ENCODE measurements at regions of chr20 and their contacts with region 1.

Region 1: GRCh38 chr20:2688041-2688591 is 4.5 kb upstream of the EBF4 start:
- DNase-seq: peak; percentile 71 to 89 (median 81)
- ATAC-seq: peak; percentile 95
- H3K4me3 ChIP-seq: no peak overlapping the region
- H3K4me3 Mint-ChIP-seq: peak overlapping the region in 9 of 10 donors; percentile 34 to 73 (median 58)
- H3K27ac ChIP-seq: no peak overlapping the region
- H3K27ac Mint-ChIP-seq: peak overlapping the region in 6 of 9 donors; percentile 37 to 80 (median 71)
- H3K4me1 ChIP-seq: peaks cover 6 to 13% of the 10 kb centered on the region in 2 donors
- H3K4me1 Mint-ChIP-seq: peaks cover 24 to 31% (median 27%) of the 10 kb centered on the region in 7 donors
- H3K27me3 ChIP-seq: no peaks in the 10 kb centered on the region
- H3K27me3 Mint-ChIP-seq: peaks cover 0 to 34% (median 7%) of the 10 kb centered on the region in 5 donors

Region 2: GRCh38 chr20:2663887-2664719 is 24.0 kb before region 1 on chr20 and contains the start of gene IDH3B:
- CTCF ChIA-PET with region 1: interaction called, 3 read pairs
- POLR2A ChIA-PET with region 1: interaction called, 13 read pairs
- intact Hi-C with region 1: loop called in 1 of 2 experiments (anchors 2 kb)
- DNase-seq: peak; percentile 76 to 94 (median 90)
- ATAC-seq: peak; percentile 99
- H3K4me3 ChIP-seq: peak within 1 kb of the TSS; percentile 89
- H3K4me3 Mint-ChIP-seq: peak within 1 kb of the TSS; percentile 87 to 97 (median 94)
- H3K27ac ChIP-seq: peak within 1 kb of the TSS; percentile 87
- H3K27ac Mint-ChIP-seq: peak within 1 kb of the TSS; percentile 94 to 99 (median 97)
- H3K4me1 ChIP-seq: peaks cover 10 to 15% of the 10 kb centered on the region in 2 donors
- H3K4me1 Mint-ChIP-seq: peaks cover 4 to 34% (median 29%) of the 10 kb centered on the region in 7 donors
- H3K27me3 ChIP-seq: no peaks in the 10 kb centered on the region
- H3K27me3 Mint-ChIP-seq: peaks cover 0 to 10% (median 0%) of the 10 kb centered on the region in 5 donors
- total RNA-seq, gene IDH3B: 105 to 161 (median 107) TPM

Region 3: GRCh38 chr20:2729251-2729713 is 41.2 kb after region 1 on chr20:
- CTCF ChIA-PET with region 1: interaction called, 25 read pairs
- POLR2A ChIA-PET with region 1: interaction called, 3 read pairs
- intact Hi-C with region 1: loop called in 1 of 2 experiments (anchors 1 kb)
- DNase-seq: peak in 7 of 9 donors; percentile 50 to 72 (median 66)
- ATAC-seq: peak; percentile 95
- H3K4me3 ChIP-seq: peak overlapping the region; percentile 2
- H3K4me3 Mint-ChIP-seq: peak overlapping the region; percentile 55 to 87 (median 71)
- H3K27ac ChIP-seq: peak overlapping the region; percentile 62
- H3K27ac Mint-ChIP-seq: peak overlapping the region; percentile 71 to 96 (median 90)
- H3K4me1 ChIP-seq: peaks cover 20 to 33% of the 10 kb centered on the region in 2 donors
- H3K4me1 Mint-ChIP-seq: peaks cover 9 to 47% (median 36%) of the 10 kb centered on the region in 7 donors
- H3K27me3 ChIP-seq: no peaks in the 10 kb centered on the region
- H3K27me3 Mint-ChIP-seq: peaks cover 0 to 36% (median 0%) of the 10 kb centered on the region in 5 donors

Region 4: GRCh38 chr20:2752567-2753460 is 64.7 kb after region 1 on chr20:
- CTCF ChIA-PET with region 1: interaction called, 15 read pairs
- POLR2A ChIA-PET with region 1: interaction called, 6 read pairs
- intact Hi-C with region 1: loop called (anchors 1 kb)
- DNase-seq: peak; percentile 36 to 63 (median 53)
- ATAC-seq: peak; percentile 48
- H3K4me3 ChIP-seq: peak overlapping the region; percentile 64
- H3K4me3 Mint-ChIP-seq: peak overlapping the region; percentile 74 to 90 (median 86)
- H3K27ac ChIP-seq: no peak overlapping the region
- H3K27ac Mint-ChIP-seq: peak overlapping the region in 8 of 9 donors; percentile 17 to 85 (median 56)
- H3K4me1 ChIP-seq: peaks cover 12 to 18% of the 10 kb centered on the region in 2 donors
- H3K4me1 Mint-ChIP-seq: peaks cover 20 to 35% (median 27%) of the 10 kb centered on the region in 7 donors
- H3K27me3 ChIP-seq: no peaks in the 10 kb centered on the region
- H3K27me3 Mint-ChIP-seq: peaks cover 6 to 54% (median 9%) of the 10 kb centered on the region in 5 donors

Region 5: DNA sequence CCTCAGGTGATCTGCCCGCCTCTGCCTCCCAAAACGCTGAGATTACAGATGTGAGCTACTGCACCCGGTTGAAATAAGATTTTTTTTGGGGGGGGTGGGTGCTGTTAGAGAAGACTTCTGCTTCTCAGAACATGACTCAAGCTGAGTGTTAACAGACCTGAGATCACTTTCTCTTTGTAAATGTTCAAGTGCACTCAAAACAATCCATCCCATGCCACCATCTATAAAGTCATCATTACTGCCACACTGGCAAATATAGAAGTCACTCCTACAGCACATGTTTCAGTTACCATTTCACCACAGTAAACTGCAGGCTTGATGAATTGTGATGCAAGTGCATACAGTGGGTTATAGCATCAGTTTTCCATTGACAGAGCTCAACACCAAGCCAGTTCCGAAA is 161.4 kb after region 1 on chr20:
- CTCF ChIA-PET with region 1: no interaction called
- POLR2A ChIA-PET with region 1: no interaction called
- intact Hi-C with region 1: loop called (anchors 1 to 5 kb)
- DNase-seq: no peak
- ATAC-seq: no peak
- H3K4me3 ChIP-seq: no peak overlapping the region
- H3K4me3 Mint-ChIP-seq: no peak overlapping the region
- H3K27ac ChIP-seq: no peak overlapping the region
- H3K27ac Mint-ChIP-seq: peak overlapping the region in 1 of 9 donors; percentile 18
- H3K4me1 ChIP-seq: peaks cover 0 to 10% of the 10 kb centered on the region in 2 donors
- H3K4me1 Mint-ChIP-seq: peaks cover 14 to 34% (median 27%) of the 10 kb centered on the region in 7 donors
- H3K27me3 ChIP-seq: no peaks in the 10 kb centered on the region
- H3K27me3 Mint-ChIP-seq: no peaks in the 10 kb centered on the region

Region 6: DNA sequence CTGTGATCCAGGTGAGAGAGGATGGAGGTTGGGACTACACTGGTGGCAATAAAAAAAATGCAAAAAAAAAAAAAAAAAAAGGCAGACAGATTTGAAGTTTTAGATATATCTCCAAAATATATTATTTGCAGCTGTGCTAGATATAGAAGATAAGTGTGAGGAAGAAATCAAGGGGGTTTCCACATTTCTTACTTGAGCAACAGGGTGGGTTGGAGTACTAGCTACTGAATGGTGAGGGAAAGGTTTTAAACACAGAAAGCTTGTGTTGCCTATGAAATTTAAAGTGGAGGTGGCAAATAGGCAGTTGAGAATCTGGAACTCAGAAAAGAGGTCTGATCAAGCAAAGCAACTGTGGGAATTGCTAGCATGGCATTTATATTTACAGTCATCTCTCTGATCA is 295.4 kb after region 1 on chr20:
- CTCF ChIA-PET with region 1: no interaction called
- POLR2A ChIA-PET with region 1: no interaction called
- intact Hi-C with region 1: loop called in 1 of 2 experiments (anchors 1 kb)
- DNase-seq: no peak
- ATAC-seq: no peak
- H3K4me3 ChIP-seq: no peak overlapping the region
- H3K4me3 Mint-ChIP-seq: no peak overlapping the region
- H3K27ac ChIP-seq: no peak overlapping the region
- H3K27ac Mint-ChIP-seq: no peak overlapping the region
- H3K4me1 ChIP-seq: peaks cover 0 to 7% of the 10 kb centered on the region in 2 donors
- H3K4me1 Mint-ChIP-seq: peaks cover 4 to 31% (median 7%) of the 10 kb centered on the region in 7 donors
- H3K27me3 ChIP-seq: no peaks in the 10 kb centered on the region
- H3K27me3 Mint-ChIP-seq: no peaks in the 10 kb centered on the region

Region 7: DNA sequence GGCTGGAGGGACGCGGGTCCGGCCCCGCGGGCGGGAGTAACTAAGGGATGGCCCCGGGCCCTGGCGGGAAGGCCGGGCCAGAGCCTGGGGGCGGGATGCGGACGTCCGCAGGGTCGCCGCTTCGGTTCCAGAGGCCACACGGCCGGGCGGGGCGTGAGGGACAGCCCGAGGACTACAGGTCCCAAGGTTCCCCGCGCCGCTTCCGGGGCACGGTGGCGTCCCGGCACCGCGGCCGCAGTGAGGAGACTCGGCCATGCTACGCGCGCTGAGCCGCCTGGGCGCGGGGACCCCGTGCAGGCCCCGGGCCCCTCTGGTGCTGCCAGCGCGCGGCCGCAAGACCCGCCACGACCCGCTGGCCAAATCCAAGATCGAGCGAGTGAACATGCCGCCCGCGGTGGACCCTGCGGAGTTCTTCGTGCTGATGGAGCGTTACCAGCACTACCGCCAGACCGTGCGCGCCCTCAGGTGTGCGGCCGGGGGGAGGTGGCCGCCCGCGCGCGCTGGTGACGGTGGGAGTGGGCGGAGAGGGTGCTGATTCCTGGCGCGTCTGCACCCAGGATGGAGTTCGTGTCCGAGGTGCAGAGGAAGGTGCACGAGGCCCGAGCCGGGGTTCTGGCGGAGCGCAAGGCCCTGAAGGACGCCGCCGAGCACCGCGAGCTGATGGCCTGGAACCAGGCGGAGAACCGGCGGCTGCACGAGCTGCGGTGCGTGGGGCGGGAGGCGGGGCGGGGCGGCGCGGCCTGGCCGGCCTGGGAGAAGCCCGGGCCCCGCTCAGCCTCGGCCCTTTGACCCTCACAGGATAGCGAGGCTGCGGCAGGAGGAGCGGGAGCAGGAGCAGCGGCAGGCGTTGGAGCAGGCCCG is 357.9 kb after region 1 on chr20 and contains the start of gene MRPS26:
- CTCF ChIA-PET with region 1: no interaction called
- POLR2A ChIA-PET with region 1: no interaction called
- intact Hi-C with region 1: loop called in 1 of 2 experiments (anchors 5 kb)
- DNase-seq: peak; percentile 63 to 89 (median 76)
- ATAC-seq: peak; percentile 93
- H3K4me3 ChIP-seq: peak within 1 kb of the TSS; percentile 91
- H3K4me3 Mint-ChIP-seq: peak within 1 kb of the TSS; percentile 82 to 95 (median 92)
- H3K27ac ChIP-seq: peak within 1 kb of the TSS; percentile 70
- H3K27ac Mint-ChIP-seq: peak within 1 kb of the TSS; percentile 69 to 90 (median 79)
- H3K4me1 ChIP-seq: peaks cover 4 to 11% of the 10 kb centered on the region in 2 donors
- H3K4me1 Mint-ChIP-seq: peaks cover 11 to 23% (median 18%) of the 10 kb centered on the region in 7 donors
- H3K27me3 ChIP-seq: no peaks in the 10 kb centered on the region
- H3K27me3 Mint-ChIP-seq: no peaks in the 10 kb centered on the region
- total RNA-seq, gene MRPS26: 22.2 to 41.6 (median 29.5) TPM

Measured in naive thymus-derived CD4-positive, alpha-beta T cell (primary cell).